Calu3 (cell line): ENCODE measurements at regions of chr16 and their contacts with region 1.

Region 1: GRCh38 chr16:73878611-73879010 is 418.0 kb upstream of the PSMD7 start:
- DNase-seq: peak; percentile 30
- H3K4me3 Mint-ChIP-seq: no peak overlapping the region
- H3K27ac Mint-ChIP-seq: no peak overlapping the region
- H3K4me1 Mint-ChIP-seq: no peaks in the 10 kb centered on the region
- H3K27me3 Mint-ChIP-seq: peaks cover 79% of the 10 kb centered on the region
- CTCF ChIP-seq: peak; percentile 33

Region 2: GRCh38 chr16:72241930-72242329 is 1636.7 kb before region 1 on chr16:
- CTCF ChIA-PET with region 1: no interaction called
- intact Hi-C with region 1: loop called (anchors 5 kb)
- DNase-seq: peak; percentile 56
- H3K4me3 Mint-ChIP-seq: no peak overlapping the region
- H3K27ac Mint-ChIP-seq: no peak overlapping the region
- H3K4me1 Mint-ChIP-seq: no peaks in the 10 kb centered on the region
- H3K27me3 Mint-ChIP-seq: no peaks in the 10 kb centered on the region
- CTCF ChIP-seq: peak; percentile 77

Region 3: GRCh38 chr16:73565262-73565661 is 313.3 kb before region 1 on chr16:
- CTCF ChIA-PET with region 1: interaction called, 7 read pairs
- intact Hi-C with region 1: loop called (anchors 1 kb)
- DNase-seq: peak; percentile 19
- H3K4me3 Mint-ChIP-seq: no peak overlapping the region
- H3K27ac Mint-ChIP-seq: no peak overlapping the region
- H3K4me1 Mint-ChIP-seq: no peaks in the 10 kb centered on the region
- H3K27me3 Mint-ChIP-seq: peaks cover 45% of the 10 kb centered on the region
- CTCF ChIP-seq: no peak

Region 4: DNA sequence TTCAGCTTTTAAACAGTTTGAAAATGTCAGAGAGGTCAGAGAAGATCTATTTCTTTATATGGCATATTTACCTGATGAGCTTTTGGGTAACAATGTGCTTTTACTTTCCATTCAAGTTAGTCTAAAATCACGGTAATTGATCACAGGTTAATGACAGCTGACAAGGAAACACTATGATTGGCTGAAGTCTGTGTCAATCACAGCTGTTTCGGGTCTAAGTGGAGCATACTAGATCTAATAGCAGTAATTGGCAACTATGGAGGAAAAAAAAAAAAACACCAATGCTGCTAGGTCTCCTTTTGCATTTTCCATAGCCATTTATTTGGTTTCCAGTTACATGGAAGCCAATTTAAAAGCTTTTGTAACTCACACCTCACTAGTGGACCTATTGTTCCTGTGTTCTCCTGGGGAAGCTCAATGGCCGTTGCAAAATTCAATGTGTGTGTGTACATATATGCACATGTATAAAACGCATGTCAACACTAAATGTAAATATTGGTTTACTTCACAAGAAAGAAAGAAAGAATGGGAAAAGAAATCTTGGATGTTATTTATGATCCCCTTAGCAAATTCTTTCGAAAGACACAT is 262.4 kb before region 1 on chr16:
- CTCF ChIA-PET with region 1: interaction called, 10 read pairs
- intact Hi-C with region 1: loop called (anchors 1 kb)
- DNase-seq: no peak
- H3K4me3 Mint-ChIP-seq: no peak overlapping the region
- H3K27ac Mint-ChIP-seq: no peak overlapping the region
- H3K4me1 Mint-ChIP-seq: peaks cover 11% of the 10 kb centered on the region
- H3K27me3 Mint-ChIP-seq: peaks cover 100% of the 10 kb centered on the region
- CTCF ChIP-seq: no peak

Region 5: GRCh38 chr16:73713778-73714495 is 164.7 kb before region 1 on chr16:
- CTCF ChIA-PET with region 1: interaction called, 7 read pairs
- intact Hi-C with region 1: loop called (anchors 1 kb)
- DNase-seq: peak; percentile 65
- H3K4me3 Mint-ChIP-seq: no peak overlapping the region
- H3K27ac Mint-ChIP-seq: no peak overlapping the region
- H3K4me1 Mint-ChIP-seq: peaks cover 7% of the 10 kb centered on the region
- H3K27me3 Mint-ChIP-seq: peaks cover 38% of the 10 kb centered on the region
- CTCF ChIP-seq: peak; percentile 67

Region 6: GRCh38 chr16:73846356-73846755 is 32.3 kb before region 1 on chr16:
- CTCF ChIA-PET with region 1: no interaction called
- intact Hi-C with region 1: no loop called
- DNase-seq: no peak
- H3K4me3 Mint-ChIP-seq: no peak overlapping the region
- H3K27ac Mint-ChIP-seq: no peak overlapping the region
- H3K4me1 Mint-ChIP-seq: no peaks in the 10 kb centered on the region
- H3K27me3 Mint-ChIP-seq: peaks cover 45% of the 10 kb centered on the region
- CTCF ChIP-seq: no peak

Region 7: DNA sequence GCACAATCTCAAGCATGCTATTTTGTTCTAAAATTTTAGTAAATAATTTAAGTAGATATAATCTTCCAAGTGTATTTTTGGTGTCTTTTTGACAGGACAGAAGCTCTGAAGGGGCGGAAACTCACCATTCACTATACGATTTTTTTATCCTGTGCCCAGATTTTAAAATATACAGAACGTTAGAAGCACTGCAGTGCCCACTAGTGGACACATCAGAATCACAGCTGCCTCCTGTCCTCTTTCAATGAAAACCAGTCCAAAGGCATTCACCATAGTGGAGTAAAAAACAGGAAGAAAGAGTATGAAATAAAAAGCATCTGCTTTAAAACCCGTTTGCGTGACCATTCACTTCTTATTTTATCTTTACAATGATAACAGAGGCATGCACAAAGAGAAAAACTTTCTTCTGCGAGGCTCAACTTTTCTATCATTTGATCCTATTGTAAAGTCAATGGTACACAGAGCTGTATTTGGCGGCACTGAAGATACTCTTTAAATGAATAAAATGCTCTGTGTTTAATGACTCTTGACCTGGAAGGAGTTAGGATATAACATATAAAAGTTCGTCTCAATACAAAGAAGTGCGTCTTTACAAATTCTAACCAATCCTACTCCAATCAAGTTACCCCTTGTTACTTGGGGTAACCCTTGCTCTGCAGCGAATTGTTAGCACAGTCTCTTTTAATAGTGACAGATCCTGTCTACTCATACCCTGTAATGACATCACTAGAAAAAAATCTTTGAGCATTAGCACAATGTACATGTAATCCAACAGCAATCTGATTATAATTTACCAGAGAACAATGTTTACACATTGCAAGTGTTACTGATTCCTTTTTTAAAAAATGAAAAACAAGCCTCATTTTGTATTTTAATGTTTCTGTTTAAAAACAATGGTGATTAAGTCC is 78.2 kb after region 1 on chr16:
- CTCF ChIA-PET with region 1: interaction called, 5 read pairs
- intact Hi-C with region 1: loop called (anchors 5 kb)
- DNase-seq: peak; percentile 73
- H3K4me3 Mint-ChIP-seq: no peak overlapping the region
- H3K27ac Mint-ChIP-seq: no peak overlapping the region
- H3K4me1 Mint-ChIP-seq: no peaks in the 10 kb centered on the region
- H3K27me3 Mint-ChIP-seq: peaks cover 71% of the 10 kb centered on the region
- CTCF ChIP-seq: peak; percentile 69

Region 8: GRCh38 chr16:73966851-73967250 is 88.2 kb after region 1 on chr16:
- CTCF ChIA-PET with region 1: no interaction called
- intact Hi-C with region 1: no loop called
- DNase-seq: no peak
- H3K4me3 Mint-ChIP-seq: no peak overlapping the region
- H3K27ac Mint-ChIP-seq: no peak overlapping the region
- H3K4me1 Mint-ChIP-seq: no peaks in the 10 kb centered on the region
- H3K27me3 Mint-ChIP-seq: peaks cover 36% of the 10 kb centered on the region
- CTCF ChIP-seq: no peak

Region 9: GRCh38 chr16:74034862-74035261 is 156.3 kb after region 1 on chr16:
- CTCF ChIA-PET with region 1: interaction called, 7 read pairs
- intact Hi-C with region 1: loop called (anchors 10 kb)
- DNase-seq: peak; percentile 36
- H3K4me3 Mint-ChIP-seq: no peak overlapping the region
- H3K27ac Mint-ChIP-seq: no peak overlapping the region
- H3K4me1 Mint-ChIP-seq: no peaks in the 10 kb centered on the region
- H3K27me3 Mint-ChIP-seq: peaks cover 20% of the 10 kb centered on the region
- CTCF ChIP-seq: no peak